Heart left ventricle (tissue), 16 donors: ENCODE measurements at regions of chr11 and their contacts with region 1.

Region 1: GRCh38 chr11:32385998-32386397 is 49.3 kb downstream of the WT1 start:
- DNase-seq: peak in 1 of 5 donors; percentile 35
- ATAC-seq: peak in 3 of 4 donors; percentile 75 to 84 (median 81)
- H3K4me3 ChIP-seq: no peak overlapping the region
- H3K27ac ChIP-seq: peak overlapping the region in 4 of 12 donors; percentile 0 to 42 (median 11)
- H3K4me1 ChIP-seq: peaks cover 0 to 16% (median 9%) of the 10 kb centered on the region in 12 donors
- H3K27me3 ChIP-seq: no peaks in the 10 kb centered on the region
- CTCF ChIP-seq: peak; percentile 14 to 61 (median 49)
- POLR2A ChIP-seq: no peak

Region 2: GRCh38 chr11:32420937-32421901 is 35.2 kb after region 1 on chr11:
- intact Hi-C with region 1: loop called in 2 of 10 experiments (anchors 2 to 5 kb)
- DNase-seq: peak; percentile 55 to 70 (median 64)
- ATAC-seq: peak; percentile 73 to 95 (median 80)
- H3K4me3 ChIP-seq: no peak overlapping the region
- H3K27ac ChIP-seq: peak overlapping the region in 10 of 12 donors; percentile 13 to 72 (median 54)
- H3K4me1 ChIP-seq: peaks cover 0 to 37% (median 12%) of the 10 kb centered on the region in 12 donors
- H3K27me3 ChIP-seq: peaks cover 0 to 33% (median 6%) of the 10 kb centered on the region in 9 donors
- CTCF ChIP-seq: no peak
- POLR2A ChIP-seq: no peak

Region 3: DNA sequence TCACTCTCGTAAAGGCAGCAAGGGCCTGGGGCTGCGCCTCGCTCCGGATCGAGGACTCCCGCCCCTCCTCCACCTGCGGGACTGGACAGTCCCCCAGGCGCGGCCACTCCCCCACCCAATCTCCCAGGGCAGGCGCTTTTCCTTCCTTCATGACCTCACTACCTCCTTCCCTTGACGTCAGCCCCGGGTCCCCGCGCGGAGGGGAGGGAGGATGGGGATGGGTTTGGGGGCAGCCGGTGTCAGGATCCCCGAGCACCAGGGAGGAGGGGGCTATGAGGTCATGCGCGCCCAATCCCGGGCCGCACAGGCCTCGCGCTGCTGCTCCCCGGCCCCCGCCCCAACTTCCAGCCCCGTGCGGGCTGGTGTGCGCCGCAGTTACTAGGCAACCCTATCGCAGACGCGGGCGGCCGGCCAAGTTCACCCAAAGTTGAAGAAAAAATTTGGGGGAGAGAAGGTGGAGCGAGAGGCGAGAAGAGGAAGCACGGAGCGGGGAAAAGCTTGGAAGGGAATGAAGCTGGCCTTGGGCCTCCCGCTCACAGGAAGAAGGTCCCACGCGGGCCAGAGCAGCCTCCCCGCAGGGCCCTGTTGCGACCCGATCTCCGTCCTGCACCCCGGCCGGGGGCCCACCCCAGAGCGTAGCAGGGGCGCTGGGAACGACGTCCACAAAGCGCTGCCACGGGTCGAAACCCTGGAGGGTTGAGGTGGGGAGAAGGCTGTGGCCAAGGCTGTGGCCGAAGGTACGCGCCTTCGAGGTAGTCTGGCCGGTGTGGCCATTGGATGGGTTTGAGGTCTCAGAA is 41.0 kb after region 1 on chr11:
- intact Hi-C with region 1: loop called in 1 of 10 experiments (anchors 5 kb)
- DNase-seq: peak; percentile 67 to 85 (median 83)
- ATAC-seq: peak; percentile 77 to 96 (median 80)
- H3K4me3 ChIP-seq: peak overlapping the region in 11 of 12 donors; percentile 17 to 52 (median 41)
- H3K27ac ChIP-seq: peak overlapping the region in 11 of 12 donors; percentile 28 to 91 (median 77)
- H3K4me1 ChIP-seq: peaks cover 0 to 43% (median 21%) of the 10 kb centered on the region in 12 donors
- H3K27me3 ChIP-seq: peaks cover 15 to 88% (median 54%) of the 10 kb centered on the region in 9 donors
- CTCF ChIP-seq: no peak
- POLR2A ChIP-seq: no peak

Region 4: DNA sequence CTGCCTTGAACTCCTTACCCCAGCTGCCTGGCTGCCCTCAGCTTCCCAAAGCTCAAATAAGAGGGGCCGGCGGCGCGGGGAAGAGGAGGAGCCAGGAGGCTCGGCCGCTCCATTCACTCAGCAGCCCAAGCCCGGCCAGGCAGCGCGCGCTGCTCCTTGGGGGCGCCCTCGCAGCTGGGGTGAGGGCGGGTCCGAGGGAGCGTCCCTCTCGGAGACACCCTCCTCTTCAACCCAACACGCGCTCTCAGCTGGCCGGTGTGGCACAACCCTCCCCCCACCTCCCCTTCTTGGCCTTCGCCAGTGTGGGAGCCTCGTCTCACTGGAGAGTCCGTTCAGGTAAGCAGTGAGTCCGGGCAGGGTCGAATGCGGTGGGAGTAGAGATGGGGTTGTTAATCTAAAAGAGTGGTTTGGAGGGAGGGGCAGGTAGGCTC is 49.5 kb after region 1 on chr11 and contains the start of gene WT1:
- intact Hi-C with region 1: loop called in 2 of 10 experiments (anchors 2 to 5 kb)
- DNase-seq: peak; percentile 58 to 79 (median 68)
- ATAC-seq: peak; percentile 52 to 81 (median 74)
- H3K4me3 ChIP-seq: peak within 1 kb of the TSS; percentile 35 to 90 (median 62)
- H3K27ac ChIP-seq: peak within 1 kb of the TSS; percentile 67 to 98 (median 88)
- H3K4me1 ChIP-seq: peaks cover 0 to 64% (median 13%) of the 10 kb centered on the region in 12 donors
- H3K27me3 ChIP-seq: peaks cover 19 to 100% (median 92%) of the 10 kb centered on the region in 9 donors
- CTCF ChIP-seq: no peak
- POLR2A ChIP-seq: no peak
- total RNA-seq, gene WT1: 1.3 to 16.6 (median 2.9) TPM

Region 5: DNA sequence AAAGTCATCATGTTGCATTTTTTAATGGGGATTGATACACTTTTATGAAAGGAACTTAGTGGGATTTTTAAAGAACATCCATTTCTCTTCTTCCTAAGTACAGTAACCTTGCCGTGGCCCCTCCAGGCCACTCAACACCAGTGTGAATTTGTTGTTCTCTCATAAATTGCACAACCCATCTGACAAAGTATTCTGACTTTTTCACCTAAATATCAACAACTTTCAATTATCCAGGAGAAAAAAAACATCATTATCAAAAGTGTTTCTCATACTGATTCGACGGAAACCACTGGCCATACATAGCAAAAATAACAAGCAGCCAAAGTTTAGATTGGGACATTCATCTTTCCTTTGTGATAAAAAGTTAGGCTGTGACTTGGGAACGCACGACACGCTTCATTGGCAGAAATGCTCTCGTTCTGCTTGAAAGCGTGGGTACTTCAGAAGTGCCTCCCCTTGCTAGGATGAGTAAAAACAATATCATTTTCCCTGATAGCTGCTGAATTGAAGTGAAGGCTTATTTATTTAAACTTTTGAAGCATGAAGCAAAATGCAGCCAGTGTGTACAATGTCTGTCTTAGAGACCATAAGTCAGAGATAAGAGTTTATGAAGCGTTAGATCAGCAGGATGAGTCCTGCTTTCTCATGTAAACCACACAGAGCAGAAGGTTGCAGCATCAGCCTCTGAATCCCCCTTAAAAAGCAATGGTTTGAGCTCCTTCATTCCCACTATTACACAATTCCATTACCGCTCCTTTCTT is 177.0 kb after region 1 on chr11:
- intact Hi-C with region 1: loop called in 2 of 10 experiments (anchors 10 kb)
- DNase-seq: no peak
- ATAC-seq: no peak
- H3K4me3 ChIP-seq: no peak overlapping the region
- H3K27ac ChIP-seq: no peak overlapping the region
- H3K4me1 ChIP-seq: no peaks in the 10 kb centered on the region
- H3K27me3 ChIP-seq: no peaks in the 10 kb centered on the region
- CTCF ChIP-seq: no peak
- POLR2A ChIP-seq: no peak

Region 6: DNA sequence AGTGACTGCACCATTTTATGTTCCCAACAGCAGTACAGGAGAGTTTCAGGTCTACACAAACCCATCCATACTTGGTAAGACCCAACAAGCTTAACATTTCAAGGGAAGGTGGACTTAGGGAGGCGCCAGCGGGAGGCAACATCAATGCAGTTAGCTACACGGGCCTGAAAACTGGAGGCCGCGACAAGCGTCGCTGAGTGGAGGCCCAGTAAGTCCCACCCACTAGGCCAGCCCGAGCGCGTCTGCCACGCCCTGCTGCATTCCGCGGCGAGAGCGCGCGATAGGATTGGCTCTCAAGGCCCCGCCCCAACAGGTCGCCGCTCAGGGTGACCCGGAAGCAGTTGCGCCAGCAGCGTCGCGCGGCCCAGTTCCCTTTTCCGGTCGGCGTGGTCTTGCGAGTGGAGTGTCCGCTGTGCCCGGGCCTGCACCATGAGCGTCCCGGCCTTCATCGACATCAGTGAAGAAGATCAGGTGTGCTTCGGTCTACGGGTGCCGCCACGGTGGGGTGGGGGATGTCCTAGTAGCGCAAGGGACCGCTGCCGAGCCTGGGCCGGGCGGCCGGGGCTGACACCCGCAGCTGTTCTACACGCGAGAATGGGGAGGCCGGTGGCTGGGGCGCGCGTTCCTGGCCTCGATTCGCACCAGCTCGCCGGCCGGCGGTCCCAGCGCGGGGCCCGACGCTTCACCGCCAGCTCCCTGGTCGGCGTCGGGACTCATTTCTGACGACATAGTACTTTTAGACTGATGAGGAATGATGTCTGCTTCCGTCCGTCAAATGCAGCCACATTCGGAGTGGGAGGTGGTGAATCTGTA is 197.7 kb after region 1 on chr11 and contains the start of gene EIF3M:
- intact Hi-C with region 1: loop called in 2 of 10 experiments (anchors 10 kb)
- DNase-seq: peak; percentile 97 to 99 (median 97)
- ATAC-seq: peak; percentile 100
- H3K4me3 ChIP-seq: peak within 1 kb of the TSS; percentile 60 to 96 (median 87)
- H3K27ac ChIP-seq: peak within 1 kb of the TSS; percentile 5 to 88 (median 82)
- H3K4me1 ChIP-seq: peaks cover 0 to 44% (median 25%) of the 10 kb centered on the region in 12 donors
- H3K27me3 ChIP-seq: peaks cover 0 to 7% (median 0%) of the 10 kb centered on the region in 9 donors
- CTCF ChIP-seq: peak in 1 of 12 donors; percentile 20
- POLR2A ChIP-seq: peak in 1 of 2 donors; percentile 50
- total RNA-seq, gene EIF3M: 143 to 269 (median 172) TPM

Region 7: GRCh38 chr11:32792948-32793475 is 407.0 kb after region 1 on chr11:
- intact Hi-C with region 1: loop called in 2 of 10 experiments (anchors 5 kb)
- DNase-seq: peak in 3 of 5 donors; percentile 28 to 59 (median 37)
- ATAC-seq: peak in 3 of 4 donors; percentile 52 to 72 (median 62)
- H3K4me3 ChIP-seq: peak overlapping the region in 2 of 12 donors; percentile 21 to 29
- H3K27ac ChIP-seq: no peak overlapping the region
- H3K4me1 ChIP-seq: peaks cover 0 to 7% (median 0%) of the 10 kb centered on the region in 12 donors
- H3K27me3 ChIP-seq: peaks cover 0 to 18% (median 0%) of the 10 kb centered on the region in 9 donors
- CTCF ChIP-seq: peak; percentile 55 to 78 (median 66)
- POLR2A ChIP-seq: no peak